K562 (cell line): ENCODE measurements at regions of chr20 and their contacts with region 1.

Region 1: GRCh38 chr20:58839474-58839874 is 11.2 kb downstream of the GNAS-AS1 start:
- DNase-seq: peak; percentile 50 to 61 (median 58)
- ATAC-seq: peak; percentile 91
- H3K4me3 ChIP-seq: no peak overlapping the region
- H3K27ac ChIP-seq: no peak overlapping the region
- H3K4me1 ChIP-seq: peaks cover 0 to 12% of the 10 kb centered on the region in 2 experiments; a peak in 1 of 5 replicates
- H3K27me3 ChIP-seq: peaks cover 18 to 44% of the 10 kb centered on the region in 2 experiments; a peak in 4 of 5 replicates
- CTCF ChIP-seq: peak; percentile 55 to 65 (median 59)
- EP300 ChIP-seq: no peak
- POLR2A ChIP-seq: no peak
- RAD21 ChIP-seq: peak; percentile 28 to 65

Region 2: GRCh38 chr20:58481481-58482021 is 357.9 kb before region 1 on chr20:
- CTCF ChIA-PET with region 1: interaction called, 8 read pairs
- POLR2A ChIA-PET with region 1: interaction called, 3 read pairs
- in situ Hi-C with region 1: no loop called
- intact Hi-C with region 1: loop called (anchors 2 kb)
- DNase-seq: peak; percentile 74 to 86 (median 83)
- ATAC-seq: peak; percentile 97
- H3K4me3 ChIP-seq: no peak overlapping the region
- H3K27ac ChIP-seq: no peak overlapping the region
- H3K4me1 ChIP-seq: peaks cover 3 to 4% of the 10 kb centered on the region in 2 experiments; a peak in 3 of 5 replicates
- H3K27me3 ChIP-seq: peaks cover 8 to 24% of the 10 kb centered on the region in 2 experiments; a peak in 4 of 5 replicates
- CTCF ChIP-seq: peak; percentile 79 to 90 (median 83)
- EP300 ChIP-seq: no peak
- POLR2A ChIP-seq: no peak
- RAD21 ChIP-seq: peak; percentile 75 to 87

Region 3: DNA sequence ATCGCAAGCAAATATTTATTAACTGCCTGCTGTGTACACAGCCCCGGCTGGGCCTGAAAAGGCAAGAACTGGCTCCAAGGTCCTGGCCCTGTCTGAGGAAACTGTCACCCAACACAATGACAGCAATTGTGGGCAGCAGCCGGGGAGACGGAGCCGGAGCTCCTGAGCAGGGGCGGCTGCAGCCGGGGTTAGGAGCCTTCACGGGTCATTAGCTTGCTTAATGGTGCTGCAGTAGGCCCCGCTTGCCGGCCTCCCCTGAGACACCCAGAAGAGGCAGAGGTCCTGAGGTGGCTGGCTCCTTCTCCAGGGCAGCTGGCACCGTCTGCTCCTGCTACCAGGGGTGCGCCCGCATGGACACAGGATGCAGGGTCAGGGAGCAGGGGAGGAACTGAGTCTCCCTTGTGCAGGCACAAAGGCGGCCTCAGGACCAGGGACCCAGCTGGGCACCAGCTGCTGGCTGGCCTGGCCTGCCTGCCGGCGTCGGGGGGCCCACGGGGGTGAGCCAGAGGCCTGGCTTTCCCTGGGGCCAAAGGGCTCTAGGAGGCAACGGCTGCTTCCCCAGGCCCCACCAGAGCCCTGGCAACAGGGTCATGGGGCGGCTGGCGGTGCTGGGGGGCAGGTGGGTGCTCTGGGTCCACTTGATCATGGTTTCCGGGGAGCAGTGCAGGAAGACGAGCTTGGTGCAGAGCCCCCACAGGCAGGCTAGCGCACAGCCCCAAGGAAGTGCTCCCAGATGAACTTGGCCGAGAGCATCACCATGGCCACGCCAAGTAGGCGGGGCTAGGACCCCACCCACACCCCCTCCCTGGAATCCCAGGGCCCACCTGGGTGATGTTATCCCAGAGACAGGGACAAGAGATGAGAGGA is 122.6 kb before region 1 on chr20:
- CTCF ChIA-PET with region 1: no interaction called
- POLR2A ChIA-PET with region 1: no interaction called
- in situ Hi-C with region 1: no loop called
- intact Hi-C with region 1: no loop called
- DNase-seq: peak in 2 of 4 experiments; percentile 14 to 44
- ATAC-seq: peak; percentile 68
- H3K4me3 ChIP-seq: no peak overlapping the region
- H3K27ac ChIP-seq: no peak overlapping the region
- H3K4me1 ChIP-seq: peaks cover 0 to 27% of the 10 kb centered on the region in 2 experiments; a peak in 2 of 5 replicates
- H3K27me3 ChIP-seq: peaks cover 8 to 84% of the 10 kb centered on the region in 2 experiments; a peak in 4 of 5 replicates
- CTCF ChIP-seq: no peak
- EP300 ChIP-seq: no peak
- POLR2A ChIP-seq: no peak
- RAD21 ChIP-seq: no peak

Region 4: DNA sequence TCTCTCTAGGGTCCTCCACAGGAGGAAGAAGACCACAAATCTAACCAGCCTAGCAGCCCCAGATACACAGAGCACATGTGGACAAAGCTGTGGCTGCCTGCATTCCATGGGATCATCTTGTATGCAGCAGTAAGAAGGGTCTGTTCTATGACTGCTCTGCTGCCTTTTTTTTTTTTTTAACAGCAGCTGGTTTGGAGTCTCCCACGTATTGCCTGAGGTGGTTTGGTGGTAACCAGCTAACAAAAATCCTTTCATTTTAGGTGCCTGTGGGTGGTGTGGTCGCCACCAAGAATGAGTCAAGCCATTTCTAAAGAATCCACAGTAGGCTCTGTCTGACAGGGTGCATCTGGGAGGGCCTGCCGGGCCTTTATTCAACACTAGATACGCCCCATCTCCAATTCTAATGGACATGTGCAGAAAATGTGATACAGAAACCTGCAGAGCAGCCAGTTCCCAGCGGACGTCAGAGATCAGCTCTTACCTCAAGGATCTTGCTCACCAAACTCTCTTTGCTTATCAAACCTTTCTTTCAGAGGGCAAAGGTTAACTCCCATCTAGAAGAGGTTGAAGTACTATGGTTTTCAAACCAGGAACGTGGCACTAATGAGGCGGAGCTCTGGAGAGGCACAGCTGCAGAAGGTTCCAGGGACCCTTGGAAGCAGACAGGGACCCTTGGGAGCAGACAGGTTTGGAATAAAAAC is 20.7 kb before region 1 on chr20:
- CTCF ChIA-PET with region 1: no interaction called
- POLR2A ChIA-PET with region 1: no interaction called
- in situ Hi-C with region 1: no loop called
- intact Hi-C with region 1: loop called (anchors 1 kb)
- DNase-seq: no peak
- ATAC-seq: no peak
- H3K4me3 ChIP-seq: no peak overlapping the region
- H3K27ac ChIP-seq: no peak overlapping the region
- H3K4me1 ChIP-seq: no peaks in the 10 kb centered on the region
- H3K27me3 ChIP-seq: peaks cover 3 to 78% of the 10 kb centered on the region in 2 experiments
- CTCF ChIP-seq: no peak
- EP300 ChIP-seq: no peak
- POLR2A ChIP-seq: no peak
- RAD21 ChIP-seq: no peak